Activated B cell treated with CpG ODN at 0.5 μM for 24 hours (primary cell): ENCODE measurements at regions of chr2 and their contacts with region 1.

Region 1: DNA sequence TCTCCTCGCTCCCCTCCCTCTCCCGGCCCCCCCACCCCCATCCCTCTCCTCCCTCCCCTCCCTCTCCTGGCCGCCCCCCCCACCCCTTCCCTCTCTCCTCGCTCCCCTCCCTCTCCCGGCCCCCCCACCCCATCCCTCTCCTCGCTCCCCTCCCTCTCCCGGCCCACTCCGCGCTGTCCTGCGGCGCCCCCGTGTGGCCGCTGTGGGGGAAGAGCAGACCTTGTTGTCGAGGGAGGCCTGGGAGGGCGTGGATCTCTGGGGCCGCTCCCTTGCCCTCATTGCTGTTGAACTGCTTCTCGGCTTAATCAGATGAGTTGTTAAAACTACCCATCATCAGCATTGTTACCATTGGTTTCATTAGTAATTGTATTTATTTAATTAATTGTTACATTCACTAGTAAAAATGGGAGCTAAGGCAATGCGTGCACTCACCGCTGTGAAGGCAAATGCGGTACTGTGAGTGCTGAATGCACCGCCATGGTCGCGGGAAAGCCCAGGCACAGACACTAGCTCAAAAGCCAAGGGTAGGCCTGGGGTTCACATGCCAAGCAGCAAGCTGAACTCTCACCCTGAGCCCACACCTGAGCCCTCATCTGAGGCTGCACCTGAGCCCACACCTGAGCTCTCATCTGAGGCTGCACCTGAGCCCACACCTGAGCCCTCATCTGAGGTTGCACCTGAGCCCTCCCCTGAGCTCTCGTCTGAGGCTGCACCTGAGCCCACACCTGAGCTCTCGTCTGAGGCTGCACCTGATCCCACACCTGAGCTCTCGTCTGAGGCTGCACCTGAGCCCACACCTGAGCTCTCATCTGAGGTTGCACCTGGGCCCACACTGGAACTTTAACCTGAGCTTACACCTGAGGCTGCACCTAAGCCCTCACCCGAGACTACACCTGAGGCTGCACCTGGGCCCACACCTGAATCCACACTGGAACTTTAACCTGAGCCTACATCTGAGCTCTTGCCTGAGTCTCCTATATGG is 8.8 kb downstream of the RTP5 start:
- DNase-seq: peak; percentile 73
- ATAC-seq: no peak
- H3K4me3 Mint-ChIP-seq: no peak overlapping the region
- H3K27ac Mint-ChIP-seq: no peak overlapping the region
- H3K4me1 Mint-ChIP-seq: peaks cover 28% of the 10 kb centered on the region
- H3K27me3 Mint-ChIP-seq: no peaks in the 10 kb centered on the region
- CTCF ChIP-seq: no peak

Region 2: GRCh38 chr2:240021488-240022104 is 1856.7 kb before region 1 on chr2:
- CTCF ChIA-PET with region 1: no interaction called
- POLR2A ChIA-PET with region 1: no interaction called
- intact Hi-C with region 1: loop called (anchors 10 kb)
- DNase-seq: peak; percentile 50
- ATAC-seq: peak; percentile 23
- H3K4me3 Mint-ChIP-seq: no peak overlapping the region
- H3K27ac Mint-ChIP-seq: no peak overlapping the region
- H3K4me1 Mint-ChIP-seq: peaks cover 16% of the 10 kb centered on the region
- H3K27me3 Mint-ChIP-seq: no peaks in the 10 kb centered on the region
- CTCF ChIP-seq: no peak

Region 3: DNA sequence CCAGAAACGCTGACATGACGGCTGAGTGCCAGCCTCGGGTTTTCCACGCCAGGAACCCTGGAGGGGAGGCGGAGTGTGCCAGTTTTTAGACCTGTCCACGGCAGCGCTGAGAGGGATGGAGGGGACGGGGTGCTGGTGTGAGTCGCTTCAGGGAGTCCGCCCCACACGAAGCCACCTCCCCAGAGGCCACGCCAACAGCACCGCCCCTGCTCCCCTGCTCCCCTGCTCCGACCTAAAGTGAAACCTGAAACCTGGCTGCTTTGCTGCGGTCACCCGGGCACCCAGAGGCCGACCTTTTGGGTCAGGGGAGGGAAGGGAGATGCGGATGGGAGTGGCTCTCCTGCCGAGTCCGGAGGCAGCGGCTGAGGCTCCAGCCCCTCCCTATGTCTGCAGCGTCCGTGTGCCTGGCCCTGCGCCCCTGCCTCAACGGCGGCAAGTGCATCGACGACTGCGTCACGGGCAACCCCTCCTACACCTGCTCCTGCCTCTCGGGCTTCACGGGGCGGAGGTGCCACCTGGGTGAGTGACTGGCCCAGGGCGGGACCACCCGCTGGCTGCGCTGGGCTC is 841.8 kb before region 1 on chr2:
- CTCF ChIA-PET with region 1: no interaction called
- POLR2A ChIA-PET with region 1: no interaction called
- intact Hi-C with region 1: loop called (anchors 5 kb)
- DNase-seq: peak; percentile 63
- ATAC-seq: peak; percentile 74
- H3K4me3 Mint-ChIP-seq: peak overlapping the region; percentile 84
- H3K27ac Mint-ChIP-seq: peak overlapping the region; percentile 76
- H3K4me1 Mint-ChIP-seq: peaks cover 52% of the 10 kb centered on the region
- H3K27me3 Mint-ChIP-seq: no peaks in the 10 kb centered on the region
- CTCF ChIP-seq: no peak

Region 4: GRCh38 chr2:241609859-241610793 is 268.2 kb before region 1 on chr2:
- CTCF ChIA-PET with region 1: no interaction called
- POLR2A ChIA-PET with region 1: no interaction called
- intact Hi-C with region 1: loop called (anchors 1 kb)
- DNase-seq: peak; percentile 92
- ATAC-seq: peak; percentile 99
- H3K4me3 Mint-ChIP-seq: peak overlapping the region; percentile 66
- H3K27ac Mint-ChIP-seq: peak overlapping the region; percentile 53
- H3K4me1 Mint-ChIP-seq: peaks cover 15% of the 10 kb centered on the region
- H3K27me3 Mint-ChIP-seq: no peaks in the 10 kb centered on the region
- CTCF ChIP-seq: no peak

Region 5: GRCh38 chr2:241702132-241703031 is 175.9 kb before region 1 on chr2:
- CTCF ChIA-PET with region 1: interaction called, 5 read pairs
- POLR2A ChIA-PET with region 1: interaction called, 10 read pairs
- intact Hi-C with region 1: loop called (anchors 1 kb)
- DNase-seq: peak; percentile 93
- ATAC-seq: peak; percentile 73
- H3K4me3 Mint-ChIP-seq: peak overlapping the region; percentile 82
- H3K27ac Mint-ChIP-seq: peak overlapping the region; percentile 79
- H3K4me1 Mint-ChIP-seq: peaks cover 26% of the 10 kb centered on the region
- H3K27me3 Mint-ChIP-seq: no peaks in the 10 kb centered on the region
- CTCF ChIP-seq: no peak

Region 6: DNA sequence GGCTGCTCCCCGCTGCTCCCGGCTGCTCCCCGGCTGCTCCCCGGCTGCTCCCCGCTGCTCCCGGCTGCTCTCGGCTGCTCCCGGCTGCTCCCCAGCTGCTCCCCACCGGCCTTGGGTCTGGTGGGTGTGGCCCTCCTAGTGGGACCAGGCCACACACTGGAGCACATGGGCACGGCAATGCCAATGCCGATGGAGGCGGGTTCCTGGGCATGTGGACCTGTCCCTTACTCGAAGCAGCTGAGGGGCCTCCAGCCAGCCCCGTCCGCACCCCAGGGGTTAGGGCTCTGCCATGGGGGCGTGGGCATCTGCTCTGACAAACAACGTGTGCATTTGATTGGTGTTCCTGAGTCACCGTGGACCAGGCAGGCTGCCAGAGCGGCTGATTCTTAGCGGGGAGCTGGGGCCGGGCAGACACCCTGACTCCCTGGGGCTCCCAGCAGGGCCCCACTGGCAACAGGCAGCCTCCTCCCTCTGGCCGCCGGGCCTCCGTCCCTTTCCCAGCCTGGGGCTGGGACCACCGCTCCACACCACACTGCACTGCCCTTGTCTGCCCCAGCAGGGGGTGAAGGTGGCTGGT is 103.5 kb before region 1 on chr2:
- CTCF ChIA-PET with region 1: no interaction called
- POLR2A ChIA-PET with region 1: no interaction called
- intact Hi-C with region 1: no loop called
- DNase-seq: no peak
- ATAC-seq: no peak
- H3K4me3 Mint-ChIP-seq: no peak overlapping the region
- H3K27ac Mint-ChIP-seq: no peak overlapping the region
- H3K4me1 Mint-ChIP-seq: peaks cover 14% of the 10 kb centered on the region
- H3K27me3 Mint-ChIP-seq: no peaks in the 10 kb centered on the region
- CTCF ChIP-seq: no peak

Region 7: DNA sequence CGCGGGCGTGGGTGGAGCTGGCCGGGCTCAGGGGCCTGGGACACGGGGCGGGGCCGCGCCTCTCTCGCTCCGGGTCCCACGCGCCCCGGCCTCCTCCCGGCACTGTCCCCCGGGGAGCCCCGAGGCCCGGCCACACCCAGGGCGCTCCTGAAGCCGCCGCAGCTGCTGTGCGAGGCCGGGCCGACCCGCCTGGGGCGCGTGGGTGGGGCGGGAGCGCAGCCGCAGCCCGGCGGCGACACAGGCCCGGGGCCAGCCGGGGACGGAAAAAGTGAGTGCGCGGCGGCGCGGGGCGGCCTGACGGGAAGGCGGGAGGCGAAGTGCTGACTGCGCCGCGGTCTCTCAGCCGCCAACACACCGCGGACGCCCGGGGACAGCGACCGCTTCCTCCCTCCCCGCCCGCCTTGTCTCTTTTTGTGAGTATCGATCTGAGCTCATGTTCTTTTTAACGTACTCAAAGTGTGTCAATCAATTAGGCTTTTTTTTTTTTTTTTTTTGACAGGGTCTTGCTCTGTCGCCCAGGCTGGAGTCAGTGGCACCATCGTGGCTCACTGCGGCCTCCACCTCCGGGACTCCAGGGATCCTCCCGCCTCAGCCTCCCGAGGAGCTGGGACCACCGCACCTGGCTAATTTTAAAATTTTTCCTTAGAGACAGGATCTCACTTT is 34.1 kb before region 1 on chr2:
- CTCF ChIA-PET with region 1: interaction called, 4 read pairs
- POLR2A ChIA-PET with region 1: interaction called, 3 read pairs
- intact Hi-C with region 1: loop called (anchors 2 kb)
- DNase-seq: peak; percentile 79
- ATAC-seq: peak; percentile 91
- H3K4me3 Mint-ChIP-seq: peak overlapping the region; percentile 80
- H3K27ac Mint-ChIP-seq: peak overlapping the region; percentile 66
- H3K4me1 Mint-ChIP-seq: peaks cover 30% of the 10 kb centered on the region
- H3K27me3 Mint-ChIP-seq: no peaks in the 10 kb centered on the region
- CTCF ChIP-seq: no peak

Region 8: GRCh38 chr2:241914542-241914941 is 36.3 kb after region 1 on chr2:
- CTCF ChIA-PET with region 1: no interaction called
- POLR2A ChIA-PET with region 1: no interaction called
- intact Hi-C with region 1: no loop called
- DNase-seq: no peak
- ATAC-seq: no peak
- H3K4me3 Mint-ChIP-seq: no peak overlapping the region
- H3K27ac Mint-ChIP-seq: no peak overlapping the region
- H3K4me1 Mint-ChIP-seq: no peaks in the 10 kb centered on the region
- H3K27me3 Mint-ChIP-seq: no peaks in the 10 kb centered on the region
- CTCF ChIP-seq: no peak

Region 9: DNA sequence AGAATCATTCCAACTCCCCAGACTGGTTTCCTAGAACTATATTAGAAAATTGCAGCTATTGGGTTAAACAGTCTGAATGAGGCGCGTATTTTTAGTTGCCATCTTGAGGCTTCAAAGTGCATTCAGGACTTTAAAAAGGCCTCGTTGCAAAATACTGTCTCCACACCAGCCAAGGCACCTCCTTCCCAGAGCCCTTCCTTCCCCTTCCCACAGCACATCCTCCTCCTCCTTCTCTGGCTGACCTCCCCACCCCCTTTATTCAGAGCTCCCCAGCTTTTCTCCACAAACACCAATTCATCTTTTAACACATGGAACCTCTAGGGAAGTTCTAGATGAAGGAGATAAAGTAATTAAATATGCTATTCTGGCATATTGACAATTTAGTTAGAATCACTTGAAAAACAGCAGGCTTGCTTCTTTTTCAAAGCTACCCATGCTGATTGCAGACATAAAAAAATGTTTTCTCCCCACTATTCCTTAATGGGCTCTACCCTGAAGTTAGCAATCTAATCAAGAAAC is 81.5 kb after region 1 on chr2:
- CTCF ChIA-PET with region 1: no interaction called
- POLR2A ChIA-PET with region 1: no interaction called
- intact Hi-C with region 1: no loop called
- DNase-seq: no peak
- ATAC-seq: no peak
- H3K4me3 Mint-ChIP-seq: no peak overlapping the region
- H3K27ac Mint-ChIP-seq: peak overlapping the region; percentile 77
- H3K4me1 Mint-ChIP-seq: peaks cover 49% of the 10 kb centered on the region
- H3K27me3 Mint-ChIP-seq: no peaks in the 10 kb centered on the region
- CTCF ChIP-seq: no peak